SK-N-SH (cell line): ENCODE measurements at regions of chr2 and their contacts with region 1.

Region 1: GRCh38 chr2:130920415-130921163 is 83.9 kb downstream of the ARHGEF4 start:
- DNase-seq: peak; percentile 87
- H3K4me3 ChIP-seq: peak overlapping the region in 1 of 2 experiments; percentile 23; a peak in 1 of 4 replicates
- H3K27ac ChIP-seq: no peak overlapping the region
- H3K4me1 ChIP-seq: no peaks in the 10 kb centered on the region
- H3K27me3 ChIP-seq: no peaks in the 10 kb centered on the region
- CTCF ChIP-seq: peak; percentile 89
- EP300 ChIP-seq: no peak
- RAD21 ChIP-seq: peak; percentile 79

Region 2: GRCh38 chr2:130873700-130874346 is 46.8 kb before region 1 on chr2:
- CTCF ChIA-PET with region 1: interaction called, 24 read pairs
- POLR2A ChIA-PET with region 1: no interaction called
- DNase-seq: peak; percentile 82
- H3K4me3 ChIP-seq: no peak overlapping the region
- H3K27ac ChIP-seq: no peak overlapping the region
- H3K4me1 ChIP-seq: no peaks in the 10 kb centered on the region
- H3K27me3 ChIP-seq: no peaks in the 10 kb centered on the region
- CTCF ChIP-seq: peak; percentile 72
- EP300 ChIP-seq: no peak
- RAD21 ChIP-seq: peak; percentile 83

Region 3: GRCh38 chr2:130890941-130891669 is 29.5 kb before region 1 on chr2:
- CTCF ChIA-PET with region 1: interaction called, 11 read pairs
- POLR2A ChIA-PET with region 1: no interaction called
- DNase-seq: no peak
- H3K4me3 ChIP-seq: no peak overlapping the region
- H3K27ac ChIP-seq: no peak overlapping the region
- H3K4me1 ChIP-seq: no peaks in the 10 kb centered on the region
- H3K27me3 ChIP-seq: no peaks in the 10 kb centered on the region; the same call in 1 of the 2 replicates
- CTCF ChIP-seq: no peak
- EP300 ChIP-seq: no peak
- RAD21 ChIP-seq: no peak

Region 4: DNA sequence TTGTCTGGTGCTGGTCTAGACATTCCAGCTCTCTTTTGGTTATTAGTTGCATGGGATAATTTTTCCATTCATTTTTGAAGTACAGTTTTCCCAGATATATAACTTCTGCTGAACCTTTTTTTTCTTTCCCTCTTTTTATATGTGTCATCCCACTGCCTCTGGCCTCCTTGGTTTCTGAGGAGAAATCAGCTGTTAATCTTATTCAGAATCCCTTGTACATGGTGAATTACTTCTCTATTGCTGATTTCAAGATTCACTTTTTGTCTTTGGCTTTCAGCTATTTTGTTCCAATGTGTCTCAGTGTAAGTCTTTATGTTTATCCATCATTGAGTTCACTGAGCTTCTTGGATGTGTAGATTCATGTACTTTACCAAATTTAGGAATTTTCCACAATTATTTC is 15.9 kb after region 1 on chr2:
- CTCF ChIA-PET with region 1: interaction called, 13 read pairs
- POLR2A ChIA-PET with region 1: no interaction called
- DNase-seq: no peak
- H3K4me3 ChIP-seq: no peak overlapping the region
- H3K27ac ChIP-seq: no peak overlapping the region
- H3K4me1 ChIP-seq: no peaks in the 10 kb centered on the region
- H3K27me3 ChIP-seq: no peaks in the 10 kb centered on the region
- CTCF ChIP-seq: no peak
- EP300 ChIP-seq: no peak
- RAD21 ChIP-seq: no peak

Region 5: GRCh38 chr2:130963849-130964793 is 43.5 kb after region 1 on chr2:
- CTCF ChIA-PET with region 1: interaction called, 11 read pairs
- POLR2A ChIA-PET with region 1: no interaction called
- DNase-seq: peak; percentile 82
- H3K4me3 ChIP-seq: peak overlapping the region; percentile 31 to 35; a peak in 2 of 4 replicates
- H3K27ac ChIP-seq: no peak overlapping the region
- H3K4me1 ChIP-seq: peaks cover 0 to 8% of the 10 kb centered on the region in 2 experiments; a peak in 1 of 4 replicates
- H3K27me3 ChIP-seq: peaks cover 21% of the 10 kb centered on the region
- CTCF ChIP-seq: peak; percentile 20; the same call in 1 of the 2 replicates
- EP300 ChIP-seq: no peak
- RAD21 ChIP-seq: peak; percentile 26